Activated CD4-positive, alpha-beta memory T cell treated with anti-CD3 and anti-CD28 coated beads for 36 hours (primary cell): ENCODE measurements at regions of chr3 and their contacts with region 1.

Region 1: DNA sequence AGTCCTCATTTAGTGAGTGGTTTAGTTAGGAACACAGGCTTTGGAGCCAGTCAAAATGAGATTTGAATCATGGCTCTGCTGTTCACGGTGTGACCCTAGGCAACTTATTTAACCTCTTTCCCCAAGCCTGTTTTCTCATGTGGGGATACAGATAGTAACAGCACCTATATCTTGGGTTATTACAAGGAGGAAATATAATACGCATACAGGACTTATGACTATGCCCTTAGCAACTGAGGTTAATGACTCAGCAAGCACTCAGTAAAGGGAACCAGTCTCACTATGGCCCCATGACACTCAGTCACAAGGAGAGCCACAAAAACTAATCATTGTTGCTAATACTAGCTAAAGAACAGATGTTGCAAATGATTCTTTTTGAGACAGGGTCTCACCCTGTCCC is 45.9 kb downstream of the SUMF1 start:
- DNase-seq: peak; percentile 60
- H3K4me3 Mint-ChIP-seq: no peak overlapping the region
- H3K27ac Mint-ChIP-seq: peak overlapping the region; percentile 56
- H3K4me1 Mint-ChIP-seq: peaks cover 53% of the 10 kb centered on the region
- H3K27me3 Mint-ChIP-seq: no peaks in the 10 kb centered on the region

Region 2: DNA sequence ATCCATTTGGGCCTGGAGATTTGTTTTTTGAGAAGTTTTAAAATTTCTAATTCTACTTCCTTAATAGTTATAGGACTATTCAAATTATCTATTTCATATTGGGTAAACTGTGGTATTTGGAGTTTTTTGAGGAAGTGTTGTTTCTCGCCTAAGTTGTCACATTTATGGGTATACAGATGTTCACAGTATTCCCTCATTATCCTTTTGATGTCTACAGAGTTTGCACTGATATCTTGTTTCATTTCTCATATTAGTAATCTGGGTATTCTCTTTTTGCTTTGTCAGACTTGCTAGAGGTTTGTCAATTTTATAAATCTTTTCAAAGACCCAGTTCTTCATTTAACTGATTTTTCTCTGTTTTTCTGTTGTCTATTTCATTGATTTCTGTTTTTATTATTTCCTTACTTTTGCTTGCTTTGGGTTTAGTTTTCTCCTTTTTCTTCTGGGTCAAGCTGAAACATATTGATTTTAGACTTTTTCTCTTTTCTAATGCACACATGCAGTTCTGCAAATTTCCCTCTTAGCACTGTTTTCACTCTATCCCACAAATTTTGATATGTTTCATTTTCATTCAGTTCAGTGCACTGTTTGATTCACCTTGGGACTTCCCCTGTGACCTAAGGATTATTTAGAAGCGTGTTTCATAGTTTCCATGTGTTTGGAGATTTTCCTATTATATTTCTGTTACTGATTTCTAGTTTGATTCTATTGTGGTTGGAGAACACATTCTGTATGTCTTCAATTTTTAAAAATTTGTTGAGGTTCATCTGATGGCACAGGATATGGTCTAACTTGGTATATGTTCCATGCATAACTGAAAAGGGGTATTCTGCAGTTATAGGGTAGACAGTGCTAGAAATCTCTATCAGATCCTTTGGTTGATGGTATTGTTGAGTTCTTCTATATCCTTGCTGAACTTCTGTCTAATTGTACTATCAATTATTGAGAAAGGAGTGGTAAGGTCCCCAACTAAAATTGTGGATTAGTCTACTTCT is 33.6 kb before region 1 on chr3:
- CTCF ChIA-PET with region 1: no interaction called
- POLR2A ChIA-PET with region 1: interaction called, 3 read pairs
- intact Hi-C with region 1: loop called (anchors 1 kb)
- DNase-seq: no peak
- H3K4me3 Mint-ChIP-seq: no peak overlapping the region
- H3K27ac Mint-ChIP-seq: peak overlapping the region; percentile 47
- H3K4me1 Mint-ChIP-seq: peaks cover 32% of the 10 kb centered on the region
- H3K27me3 Mint-ChIP-seq: no peaks in the 10 kb centered on the region

Region 3: GRCh38 chr3:4396542-4396941 is 24.6 kb before region 1 on chr3:
- CTCF ChIA-PET with region 1: no interaction called
- POLR2A ChIA-PET with region 1: no interaction called
- intact Hi-C with region 1: loop called (anchors 1 kb)
- DNase-seq: no peak
- H3K4me3 Mint-ChIP-seq: no peak overlapping the region
- H3K27ac Mint-ChIP-seq: peak overlapping the region; percentile 49
- H3K4me1 Mint-ChIP-seq: peaks cover 34% of the 10 kb centered on the region
- H3K27me3 Mint-ChIP-seq: no peaks in the 10 kb centered on the region

Region 4: DNA sequence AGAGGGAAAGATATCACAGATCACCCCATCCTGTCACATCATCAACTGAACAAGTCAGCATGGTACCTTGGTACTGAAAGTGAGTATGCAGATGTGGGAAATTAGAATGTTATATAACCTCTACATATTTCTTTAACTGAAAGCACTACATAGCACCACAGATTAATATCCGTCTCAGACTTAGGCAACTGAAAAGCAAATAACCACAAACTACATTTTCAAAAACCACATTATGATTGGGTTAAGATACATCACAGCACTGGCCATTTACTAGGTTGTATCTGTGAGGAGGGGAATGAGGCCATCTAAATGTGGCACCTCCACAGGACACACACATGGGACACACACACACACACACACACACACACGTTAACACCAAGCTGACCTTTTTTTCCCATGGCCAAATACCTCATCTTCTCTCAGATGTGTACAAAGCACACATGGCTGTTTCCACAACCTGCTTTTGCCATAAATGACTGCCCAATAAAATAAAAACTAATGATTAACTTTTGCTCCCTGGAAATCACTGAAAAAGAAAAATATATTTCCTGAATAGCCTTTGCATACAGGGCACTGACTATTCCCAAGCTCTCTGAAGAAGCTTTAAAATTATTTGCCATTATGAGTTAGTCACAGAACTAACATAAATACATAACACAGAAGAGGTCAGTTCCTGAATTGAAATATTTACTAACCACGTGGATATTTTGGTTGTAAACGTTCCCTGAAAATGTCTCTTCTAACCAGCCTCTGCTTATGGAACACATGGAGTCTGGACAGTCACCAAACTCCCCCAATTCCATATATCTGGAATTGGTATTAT is 14.2 kb before region 1 on chr3:
- CTCF ChIA-PET with region 1: no interaction called
- POLR2A ChIA-PET with region 1: interaction called, 6 read pairs
- intact Hi-C with region 1: loop called (anchors 1 kb)
- DNase-seq: no peak
- H3K4me3 Mint-ChIP-seq: no peak overlapping the region
- H3K27ac Mint-ChIP-seq: no peak overlapping the region
- H3K4me1 Mint-ChIP-seq: peaks cover 47% of the 10 kb centered on the region
- H3K27me3 Mint-ChIP-seq: no peaks in the 10 kb centered on the region

Region 5: DNA sequence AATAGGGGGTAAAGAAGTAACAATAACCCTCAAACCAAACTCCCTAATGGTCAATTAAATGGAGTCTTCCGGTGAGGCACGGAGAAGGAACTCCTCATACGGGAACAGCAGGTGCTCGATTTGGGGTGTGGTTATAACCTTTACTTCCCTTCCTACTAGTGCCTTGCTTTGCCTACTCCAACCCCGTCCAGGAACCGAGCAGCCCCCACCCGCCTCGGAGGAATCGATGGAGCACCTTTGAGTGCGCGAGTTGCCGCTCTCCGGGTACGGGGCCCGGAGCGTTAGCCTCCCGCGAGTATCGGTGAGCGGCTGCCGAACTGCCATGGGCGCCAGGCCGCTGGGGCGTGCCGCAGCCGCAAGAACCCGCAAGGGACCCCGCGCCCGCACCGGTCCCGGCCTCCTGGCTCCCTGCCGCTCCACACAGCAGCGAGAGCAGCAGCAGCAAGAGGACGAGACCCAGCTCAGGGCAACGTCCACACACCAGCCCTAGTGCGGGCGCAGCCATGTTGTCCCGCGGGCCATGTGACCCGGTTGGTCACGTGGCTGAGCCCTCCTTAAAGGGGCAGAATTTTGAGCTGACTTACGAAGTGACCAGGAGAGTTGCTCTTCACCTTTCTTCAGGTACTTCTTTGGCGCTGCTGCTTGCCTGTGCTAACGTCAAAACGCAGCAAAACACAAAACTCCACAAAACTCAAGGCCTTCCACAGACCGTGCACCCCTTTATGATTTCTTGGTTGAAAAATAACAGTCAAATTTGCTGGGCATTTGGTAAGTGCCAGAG is 45.8 kb after region 1 on chr3 and contains the start of gene SUMF1:
- CTCF ChIA-PET with region 1: no interaction called
- POLR2A ChIA-PET with region 1: no interaction called
- intact Hi-C with region 1: loop called (anchors 2 kb)
- DNase-seq: peak; percentile 84
- H3K4me3 Mint-ChIP-seq: peak within 1 kb of the TSS; percentile 90
- H3K27ac Mint-ChIP-seq: peak within 1 kb of the TSS; percentile 87
- H3K4me1 Mint-ChIP-seq: peaks cover 14% of the 10 kb centered on the region
- H3K27me3 Mint-ChIP-seq: no peaks in the 10 kb centered on the region
- total RNA-seq, gene SUMF1: 5.1 to 5.6 TPM

Region 6: GRCh38 chr3:4584456-4585249 is 163.5 kb after region 1 on chr3:
- CTCF ChIA-PET with region 1: no interaction called
- POLR2A ChIA-PET with region 1: no interaction called
- intact Hi-C with region 1: loop called (anchors 1 kb)
- DNase-seq: peak; percentile 48
- H3K4me3 Mint-ChIP-seq: peak overlapping the region; percentile 81
- H3K27ac Mint-ChIP-seq: peak overlapping the region; percentile 73
- H3K4me1 Mint-ChIP-seq: peaks cover 66% of the 10 kb centered on the region
- H3K27me3 Mint-ChIP-seq: no peaks in the 10 kb centered on the region